ENCODE measurements at regions of chr5 and their contacts with region 1.

Region 1: DNA sequence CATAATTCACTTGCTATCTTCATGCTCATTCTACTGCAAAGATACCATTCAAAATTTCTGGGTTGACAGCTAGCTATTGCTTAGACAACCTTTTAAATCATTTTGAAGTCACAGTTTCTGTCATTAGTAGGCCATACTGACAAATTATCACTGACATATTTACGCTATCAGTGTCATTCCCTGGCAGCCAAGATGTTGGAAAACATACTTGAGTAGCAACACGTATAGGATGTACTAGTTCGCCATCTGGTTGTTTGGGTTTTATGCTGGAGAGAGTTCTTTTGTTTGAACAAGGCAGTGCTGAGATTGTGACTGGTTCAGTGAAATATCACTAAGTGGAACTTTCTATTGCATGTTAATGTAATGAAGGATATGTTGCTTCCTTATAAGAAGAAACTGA is 621.9 kb downstream of the DTWD2 start:
- DNase-seq: no peak
- ATAC-seq: no peak
- H3K4me3 ChIP-seq: no peak overlapping the region
- H3K27ac ChIP-seq: no peak overlapping the region
- H3K4me1 ChIP-seq: no peaks in the 10 kb centered on the region
- H3K27me3 ChIP-seq: no peaks in the 10 kb centered on the region
- CTCF ChIP-seq: no peak

Region 2: DNA sequence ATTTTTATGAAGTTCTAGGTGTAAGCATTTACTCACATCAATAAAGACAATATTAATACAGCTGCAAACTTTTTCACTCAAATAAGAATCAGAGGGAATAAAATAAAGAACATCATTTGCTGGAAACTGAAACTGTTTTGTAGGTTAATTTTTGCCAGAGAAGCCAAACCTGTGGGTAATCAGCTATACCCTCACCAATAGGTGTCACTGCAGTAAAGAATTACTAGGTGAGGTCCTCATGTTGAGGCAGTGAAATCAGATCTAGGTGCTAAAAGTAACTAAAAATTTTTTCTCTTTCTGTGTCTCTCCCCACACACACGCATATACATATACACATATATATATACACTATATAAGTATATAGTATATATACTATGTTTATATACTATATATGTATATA is 775.5 kb before region 1 on chr5:
- intact Hi-C with region 1: loop called in 1 of 10 experiments (anchors 5 kb)
- DNase-seq: no peak
- ATAC-seq: no peak
- H3K4me3 ChIP-seq: no peak overlapping the region
- H3K27ac ChIP-seq: no peak overlapping the region
- H3K4me1 ChIP-seq: no peaks in the 10 kb centered on the region
- H3K27me3 ChIP-seq: no peaks in the 10 kb centered on the region
- CTCF ChIP-seq: peak in 7 of 9 donors; percentile 39 to 61 (median 55)

Region 3: GRCh38 chr5:118479285-118479684 is 112.9 kb after region 1 on chr5:
- intact Hi-C with region 1: no loop called
- DNase-seq: peak in 1 of 2 donors; percentile 17
- ATAC-seq: peak in 3 of 8 donors; percentile 47 to 68 (median 59)
- H3K4me3 ChIP-seq: no peak overlapping the region
- H3K27ac ChIP-seq: no peak overlapping the region
- H3K4me1 ChIP-seq: no peaks in the 10 kb centered on the region
- H3K27me3 ChIP-seq: no peaks in the 10 kb centered on the region
- CTCF ChIP-seq: no peak

Measured in heart right ventricle (tissue), 16 donors.